Naive thymus-derived CD4-positive, alpha-beta T cell (primary cell): ENCODE measurements at regions of chr2 and their contacts with region 1.

Region 1: GRCh38 chr2:176554101-176555048 is 285.1 kb downstream of the MTX2 start:
- DNase-seq: peak in 8 of 9 donors; percentile 23 to 66 (median 48)
- ATAC-seq: peak; percentile 69
- H3K4me3 ChIP-seq: peak overlapping the region; percentile 62
- H3K4me3 Mint-ChIP-seq: peak overlapping the region; percentile 75 to 93 (median 85)
- H3K27ac ChIP-seq: no peak overlapping the region
- H3K27ac Mint-ChIP-seq: peak overlapping the region in 3 of 9 donors; percentile 28 to 41 (median 38)
- H3K4me1 ChIP-seq: no peaks in the 10 kb centered on the region
- H3K4me1 Mint-ChIP-seq: peaks cover 6 to 13% (median 13%) of the 10 kb centered on the region in 7 donors
- H3K27me3 ChIP-seq: no peaks in the 10 kb centered on the region
- H3K27me3 Mint-ChIP-seq: peaks cover 45 to 66% (median 48%) of the 10 kb centered on the region in 5 donors

Region 2: GRCh38 chr2:175690113-175690837 is 864.1 kb before region 1 on chr2:
- CTCF ChIA-PET with region 1: no interaction called
- POLR2A ChIA-PET with region 1: no interaction called
- intact Hi-C with region 1: loop called in 1 of 2 experiments (anchors 1 kb)
- DNase-seq: peak in 7 of 9 donors; percentile 5 to 44 (median 28)
- ATAC-seq: peak; percentile 61
- H3K4me3 ChIP-seq: no peak overlapping the region
- H3K4me3 Mint-ChIP-seq: no peak overlapping the region
- H3K27ac ChIP-seq: no peak overlapping the region
- H3K27ac Mint-ChIP-seq: no peak overlapping the region
- H3K4me1 ChIP-seq: no peaks in the 10 kb centered on the region
- H3K4me1 Mint-ChIP-seq: peaks cover 0 to 2% (median 0%) of the 10 kb centered on the region in 7 donors
- H3K27me3 ChIP-seq: no peaks in the 10 kb centered on the region
- H3K27me3 Mint-ChIP-seq: peaks cover 14 to 47% (median 32%) of the 10 kb centered on the region in 5 donors

Region 3: DNA sequence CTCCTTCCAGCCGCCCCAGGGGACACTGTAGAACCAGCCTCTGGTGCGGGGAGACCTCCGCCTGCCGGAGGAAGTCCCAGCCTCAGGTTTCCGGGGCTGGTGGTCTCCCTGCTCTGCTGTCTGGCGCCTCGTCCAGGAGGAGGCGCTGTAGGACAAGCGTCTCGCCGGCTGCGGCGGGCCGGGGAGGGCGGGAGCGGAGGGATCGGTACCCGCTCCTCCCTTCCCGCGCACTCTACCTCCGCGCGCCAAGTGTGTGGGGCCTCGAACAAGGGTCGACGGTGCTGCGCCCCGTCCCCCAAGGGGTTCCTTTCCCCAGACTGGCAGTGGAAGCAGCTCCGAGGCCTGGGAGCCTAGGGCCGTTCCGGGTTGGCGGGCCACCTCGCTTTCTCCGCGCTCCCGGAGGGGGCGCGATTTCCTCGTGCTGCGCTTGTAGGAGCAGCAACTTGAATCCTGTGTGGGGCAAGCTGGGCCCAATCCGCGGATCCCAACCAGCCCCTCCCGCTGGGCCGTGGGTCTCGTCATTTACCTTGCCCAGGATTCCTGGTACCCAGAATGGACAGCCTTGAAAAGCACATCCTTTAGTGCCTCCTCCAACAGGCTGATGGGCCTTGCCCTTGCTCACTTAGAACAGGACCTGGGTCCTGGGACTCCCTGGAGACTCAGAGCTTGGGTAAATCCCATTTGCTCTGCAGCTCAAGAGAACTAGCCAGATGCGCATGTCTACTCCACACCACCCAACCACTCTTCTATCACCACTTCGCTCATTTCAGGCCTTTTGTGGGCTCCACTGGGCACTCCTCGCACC is 413.7 kb before region 1 on chr2:
- CTCF ChIA-PET with region 1: no interaction called
- POLR2A ChIA-PET with region 1: no interaction called
- intact Hi-C with region 1: loop called (anchors 2 to 5 kb)
- DNase-seq: peak; percentile 35 to 76 (median 61)
- ATAC-seq: peak; percentile 87
- H3K4me3 ChIP-seq: peak overlapping the region; percentile 36
- H3K4me3 Mint-ChIP-seq: peak overlapping the region in 9 of 10 donors; percentile 23 to 78 (median 43)
- H3K27ac ChIP-seq: no peak overlapping the region
- H3K27ac Mint-ChIP-seq: peak overlapping the region in 1 of 9 donors; percentile 0
- H3K4me1 ChIP-seq: peaks cover 3 to 26% of the 10 kb centered on the region in 2 donors
- H3K4me1 Mint-ChIP-seq: peaks cover 7 to 46% (median 36%) of the 10 kb centered on the region in 7 donors
- H3K27me3 ChIP-seq: peaks cover 16 to 51% of the 10 kb centered on the region in 2 donors
- H3K27me3 Mint-ChIP-seq: peaks cover 83 to 91% (median 88%) of the 10 kb centered on the region in 5 donors

Region 4: DNA sequence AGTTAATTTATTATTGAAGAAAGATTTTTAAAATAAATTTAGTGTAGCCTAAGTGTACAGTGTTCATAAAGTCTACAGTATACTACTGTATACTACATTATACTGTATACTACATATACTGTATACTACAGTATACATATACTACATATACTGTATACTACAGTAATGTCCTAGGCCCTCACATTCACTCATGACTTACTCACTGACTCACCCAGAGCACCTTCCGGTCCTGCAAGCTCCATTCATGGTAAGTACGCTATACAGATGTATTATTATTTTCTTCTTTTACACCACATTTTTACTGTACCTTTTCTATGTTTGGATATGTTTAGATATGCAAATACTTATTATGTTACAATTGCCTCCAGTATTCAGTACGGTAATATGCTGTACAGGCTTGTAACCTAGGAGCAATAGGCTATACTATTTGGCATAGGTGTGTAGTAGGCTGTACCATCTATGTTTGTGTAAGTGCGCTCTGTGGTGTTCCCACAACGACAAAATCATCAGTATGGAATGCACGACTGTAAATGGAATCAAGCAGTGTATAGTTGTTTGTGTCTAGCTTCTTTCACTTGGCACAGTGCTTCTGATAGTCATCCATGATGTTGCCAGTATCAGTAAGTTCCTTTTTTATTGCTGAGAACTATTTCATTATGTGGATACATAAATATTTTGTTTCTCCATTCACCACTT is 39.4 kb before region 1 on chr2:
- CTCF ChIA-PET with region 1: no interaction called
- POLR2A ChIA-PET with region 1: no interaction called
- intact Hi-C with region 1: no loop called
- DNase-seq: no peak
- ATAC-seq: no peak
- H3K4me3 ChIP-seq: no peak overlapping the region
- H3K4me3 Mint-ChIP-seq: no peak overlapping the region
- H3K27ac ChIP-seq: no peak overlapping the region
- H3K27ac Mint-ChIP-seq: no peak overlapping the region
- H3K4me1 ChIP-seq: peaks cover 0 to 4% of the 10 kb centered on the region in 2 donors
- H3K4me1 Mint-ChIP-seq: peaks cover 4 to 17% (median 12%) of the 10 kb centered on the region in 7 donors
- H3K27me3 ChIP-seq: no peaks in the 10 kb centered on the region
- H3K27me3 Mint-ChIP-seq: peaks cover 0 to 18% (median 5%) of the 10 kb centered on the region in 5 donors

Region 5: DNA sequence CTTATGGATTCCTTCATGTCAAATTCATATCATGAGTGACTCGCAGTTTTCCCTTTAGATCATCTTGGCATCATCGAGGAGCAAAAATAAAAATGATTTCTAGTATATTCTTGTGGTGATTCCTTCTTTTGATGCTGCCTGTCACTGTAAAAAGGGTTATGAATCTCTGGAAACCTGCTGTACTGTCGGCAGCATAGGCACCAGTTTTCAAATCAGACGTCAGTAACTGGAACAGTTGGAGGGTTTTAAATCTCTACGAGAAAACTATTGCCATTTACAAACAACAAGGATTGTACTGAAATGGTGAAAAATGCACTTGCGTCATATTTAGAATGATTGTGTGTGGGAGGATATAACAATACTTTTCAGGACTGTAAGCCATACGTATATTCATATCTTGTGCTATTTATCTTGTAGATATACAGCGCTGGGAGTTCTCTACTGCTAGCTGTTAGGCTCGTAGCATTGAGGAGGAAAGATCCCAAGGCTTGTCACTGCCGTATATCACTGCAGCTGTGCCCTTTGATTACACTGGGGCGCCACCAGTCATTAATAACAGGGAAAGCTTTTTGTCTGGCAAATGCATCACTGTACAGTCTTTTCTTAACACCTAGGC is 35.6 kb after region 1 on chr2:
- CTCF ChIA-PET with region 1: no interaction called
- POLR2A ChIA-PET with region 1: no interaction called
- intact Hi-C with region 1: no loop called
- DNase-seq: no peak
- ATAC-seq: no peak
- H3K4me3 ChIP-seq: no peak overlapping the region
- H3K4me3 Mint-ChIP-seq: no peak overlapping the region
- H3K27ac ChIP-seq: no peak overlapping the region
- H3K27ac Mint-ChIP-seq: no peak overlapping the region
- H3K4me1 ChIP-seq: no peaks in the 10 kb centered on the region
- H3K4me1 Mint-ChIP-seq: no peaks in the 10 kb centered on the region
- H3K27me3 ChIP-seq: no peaks in the 10 kb centered on the region
- H3K27me3 Mint-ChIP-seq: peaks cover 17 to 34% (median 26%) of the 10 kb centered on the region in 5 donors

Region 6: DNA sequence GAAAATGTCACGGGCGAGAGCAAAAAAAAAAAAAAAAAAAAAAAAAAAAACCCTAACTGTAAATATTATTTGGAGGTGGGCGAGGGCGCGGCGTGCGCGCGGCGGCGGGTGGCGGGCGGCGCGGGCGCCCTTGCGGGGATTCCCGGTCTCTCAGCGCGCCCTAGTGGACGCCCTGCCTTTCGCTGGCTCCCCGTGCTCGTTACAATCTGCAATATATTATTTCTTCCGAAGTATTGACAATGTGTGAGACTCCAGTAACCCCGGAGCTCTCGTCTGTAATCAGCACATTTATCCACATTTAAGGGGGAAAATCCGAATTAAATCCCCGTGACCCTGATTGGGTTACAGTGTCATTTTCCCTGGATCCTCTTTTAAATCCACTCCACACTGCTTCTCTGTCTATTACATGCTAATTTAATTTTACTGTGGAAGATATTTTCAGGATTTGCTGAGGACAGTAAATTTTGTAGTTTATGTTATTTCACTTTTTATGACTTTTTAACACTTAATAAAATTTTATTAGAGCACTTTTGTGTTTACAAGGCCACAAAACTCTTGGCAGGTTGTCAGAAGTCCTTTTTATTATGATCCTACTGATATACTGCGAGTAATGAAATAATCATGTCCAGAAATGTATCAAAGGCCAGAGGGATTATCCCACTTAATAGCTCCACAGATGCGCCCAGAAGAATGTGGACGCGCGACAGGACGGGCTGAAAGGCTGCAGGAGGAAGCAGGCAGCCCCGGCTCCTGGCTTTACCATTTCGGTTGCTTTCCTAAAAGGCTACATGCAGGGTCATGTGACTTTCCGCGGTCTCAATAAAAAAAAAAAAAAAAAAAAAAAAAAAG is 84.0 kb after region 1 on chr2:
- CTCF ChIA-PET with region 1: no interaction called
- POLR2A ChIA-PET with region 1: no interaction called
- intact Hi-C with region 1: loop called in 1 of 2 experiments (anchors 2 kb)
- DNase-seq: peak in 8 of 9 donors; percentile 28 to 67 (median 50)
- ATAC-seq: peak; percentile 87
- H3K4me3 ChIP-seq: peak overlapping the region; percentile 45
- H3K4me3 Mint-ChIP-seq: peak overlapping the region in 9 of 10 donors; percentile 55 to 81 (median 70)
- H3K27ac ChIP-seq: no peak overlapping the region
- H3K27ac Mint-ChIP-seq: no peak overlapping the region
- H3K4me1 ChIP-seq: no peaks in the 10 kb centered on the region
- H3K4me1 Mint-ChIP-seq: peaks cover 0 to 10% (median 3%) of the 10 kb centered on the region in 7 donors
- H3K27me3 ChIP-seq: peaks cover 3 to 10% of the 10 kb centered on the region in 2 donors
- H3K27me3 Mint-ChIP-seq: peaks cover 53 to 78% (median 71%) of the 10 kb centered on the region in 5 donors

Region 7: GRCh38 chr2:176814306-176815052 is 260.1 kb after region 1 on chr2:
- CTCF ChIA-PET with region 1: interaction called, 3 read pairs
- POLR2A ChIA-PET with region 1: no interaction called
- intact Hi-C with region 1: loop called in 1 of 2 experiments (anchors 2 kb)
- DNase-seq: peak in 5 of 9 donors; percentile 34 to 47 (median 44)
- ATAC-seq: peak; percentile 80
- H3K4me3 ChIP-seq: no peak overlapping the region
- H3K4me3 Mint-ChIP-seq: peak overlapping the region in 7 of 10 donors; percentile 7 to 62 (median 24)
- H3K27ac ChIP-seq: no peak overlapping the region
- H3K27ac Mint-ChIP-seq: no peak overlapping the region
- H3K4me1 ChIP-seq: peaks cover 3 to 7% of the 10 kb centered on the region in 2 donors
- H3K4me1 Mint-ChIP-seq: peaks cover 10 to 26% (median 19%) of the 10 kb centered on the region in 7 donors
- H3K27me3 ChIP-seq: no peaks in the 10 kb centered on the region
- H3K27me3 Mint-ChIP-seq: peaks cover 0 to 7% (median 0%) of the 10 kb centered on the region in 5 donors